Naive thymus-derived CD4-positive, alpha-beta T cell (primary cell): ENCODE measurements at regions of chr13 and their contacts with region 1.

Region 1: GRCh38 chr13:43085545-43085944 is 62.2 kb downstream of the DNAJC15 start:
- DNase-seq: peak in 3 of 9 donors; percentile 5 to 21 (median 7)
- ATAC-seq: no peak
- H3K4me3 ChIP-seq: no peak overlapping the region
- H3K4me3 Mint-ChIP-seq: no peak overlapping the region
- H3K27ac ChIP-seq: no peak overlapping the region
- H3K27ac Mint-ChIP-seq: no peak overlapping the region
- H3K4me1 ChIP-seq: no peaks in the 10 kb centered on the region
- H3K4me1 Mint-ChIP-seq: peaks cover 0 to 18% (median 14%) of the 10 kb centered on the region in 7 donors
- H3K27me3 ChIP-seq: no peaks in the 10 kb centered on the region
- H3K27me3 Mint-ChIP-seq: no peaks in the 10 kb centered on the region

Region 2: GRCh38 chr13:43074824-43075510 is 10.6 kb before region 1 on chr13:
- CTCF ChIA-PET with region 1: interaction called, 4 read pairs
- POLR2A ChIA-PET with region 1: no interaction called
- intact Hi-C with region 1: loop called in 1 of 2 experiments (anchors 2 kb)
- DNase-seq: no peak
- ATAC-seq: no peak
- H3K4me3 ChIP-seq: no peak overlapping the region
- H3K4me3 Mint-ChIP-seq: peak overlapping the region in 9 of 10 donors; percentile 1 to 68 (median 41)
- H3K27ac ChIP-seq: no peak overlapping the region
- H3K27ac Mint-ChIP-seq: peak overlapping the region in 3 of 9 donors; percentile 14 to 30 (median 23)
- H3K4me1 ChIP-seq: peaks cover 0 to 5% of the 10 kb centered on the region in 2 donors
- H3K4me1 Mint-ChIP-seq: peaks cover 18 to 64% (median 51%) of the 10 kb centered on the region in 7 donors
- H3K27me3 ChIP-seq: no peaks in the 10 kb centered on the region
- H3K27me3 Mint-ChIP-seq: no peaks in the 10 kb centered on the region